IMR-90 (cell line): ENCODE measurements at regions of chr7 and their contacts with region 1.

Region 1: GRCh38 chr7:111735661-111736551 is 173.6 kb upstream of the IMMP2L start:
- DNase-seq: peak; percentile 77
- ATAC-seq: peak; percentile 93
- H3K4me3 ChIP-seq: no peak overlapping the region
- H3K27ac ChIP-seq: no peak overlapping the region
- H3K4me1 ChIP-seq: 0 out of 2 replicates have a peak, but pooled peaks cover 2% of the 10 kb centered on the region
- H3K27me3 ChIP-seq: no peaks in the 10 kb centered on the region
- CTCF ChIP-seq: peak; percentile 85
- POLR2A ChIP-seq: no peak
- RAD21 ChIP-seq: peak; percentile 90

Region 2: GRCh38 chr7:111089822-111090426 is 646.0 kb before region 1 on chr7:
- CTCF ChIA-PET with region 1: no interaction called
- POLR2A ChIA-PET with region 1: no interaction called
- dilution Hi-C with region 1: no loop called
- in situ Hi-C with region 1: loop called (anchors 10 kb)
- intact Hi-C with region 1: loop called (anchors 2 kb)
- DNase-seq: peak; percentile 64
- ATAC-seq: peak; percentile 38; the same call in 1 of the 2 replicates
- H3K4me3 ChIP-seq: no peak overlapping the region
- H3K27ac ChIP-seq: no peak overlapping the region
- H3K4me1 ChIP-seq: no peaks in the 10 kb centered on the region
- H3K27me3 ChIP-seq: no peaks in the 10 kb centered on the region
- CTCF ChIP-seq: peak; percentile 75
- POLR2A ChIP-seq: no peak
- RAD21 ChIP-seq: peak; percentile 68

Region 3: DNA sequence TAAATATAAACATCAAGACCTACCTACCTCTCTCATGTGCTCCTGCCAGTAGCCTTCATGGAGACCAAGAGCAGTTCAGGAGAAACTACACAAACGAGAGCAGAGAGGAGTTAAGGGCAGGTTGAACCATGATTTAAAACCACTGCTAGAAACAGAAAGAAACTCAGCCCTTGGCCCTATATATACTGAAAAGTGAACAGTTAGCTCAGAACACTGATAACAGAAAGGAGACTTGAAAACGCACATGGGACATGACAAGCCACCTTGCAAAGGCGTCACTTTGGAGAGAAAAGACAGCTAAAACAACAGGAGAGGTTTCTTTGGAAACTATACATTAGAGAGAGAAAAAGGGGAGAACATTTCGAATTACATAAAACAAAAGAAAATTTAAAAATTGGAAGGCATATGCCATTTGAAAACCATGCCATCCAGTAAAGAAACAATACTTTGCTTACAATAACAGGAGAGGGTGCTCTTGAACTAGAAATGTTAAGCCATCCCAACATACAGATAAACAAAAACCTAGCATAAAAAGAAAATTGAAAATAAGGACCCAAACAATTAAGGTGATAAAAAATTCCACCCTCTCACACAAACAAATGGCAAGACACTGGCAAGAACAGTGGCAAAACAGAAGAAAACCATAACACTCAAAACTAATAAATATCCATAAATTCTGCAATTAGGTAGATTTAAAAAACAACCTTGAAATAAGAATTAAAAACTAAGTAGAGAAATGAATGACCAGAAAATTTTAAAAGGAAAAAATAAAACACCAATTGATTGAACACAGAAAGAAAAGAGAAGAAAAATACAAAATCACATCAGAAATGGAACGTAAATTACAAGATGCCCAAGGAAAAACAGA is 406.3 kb before region 1 on chr7:
- CTCF ChIA-PET with region 1: no interaction called
- POLR2A ChIA-PET with region 1: no interaction called
- dilution Hi-C with region 1: no loop called
- in situ Hi-C with region 1: loop called (anchors 10 kb)
- intact Hi-C with region 1: loop called (anchors 1 kb)
- DNase-seq: peak; percentile 33
- ATAC-seq: no peak
- H3K4me3 ChIP-seq: no peak overlapping the region
- H3K27ac ChIP-seq: no peak overlapping the region
- H3K4me1 ChIP-seq: no peaks in the 10 kb centered on the region
- H3K27me3 ChIP-seq: no peaks in the 10 kb centered on the region
- CTCF ChIP-seq: peak; percentile 47
- POLR2A ChIP-seq: no peak
- RAD21 ChIP-seq: peak; percentile 58

Region 4: GRCh38 chr7:112481833-112482670 is 746.1 kb after region 1 on chr7:
- CTCF ChIA-PET with region 1: no interaction called
- POLR2A ChIA-PET with region 1: no interaction called
- dilution Hi-C with region 1: no loop called
- in situ Hi-C with region 1: no loop called
- intact Hi-C with region 1: no loop called
- DNase-seq: peak; percentile 86
- ATAC-seq: peak; percentile 69
- H3K4me3 ChIP-seq: no peak overlapping the region
- H3K27ac ChIP-seq: peak overlapping the region; percentile 31; the same call in 1 of the 2 replicates
- H3K4me1 ChIP-seq: peaks cover 4% of the 10 kb centered on the region; the same call in 1 of the 2 replicates
- H3K27me3 ChIP-seq: no peaks in the 10 kb centered on the region
- CTCF ChIP-seq: no peak
- POLR2A ChIP-seq: no peak
- RAD21 ChIP-seq: no peak